Panc1 (cell line): ENCODE measurements at regions of chr17 and their contacts with region 1.

Region 1: DNA sequence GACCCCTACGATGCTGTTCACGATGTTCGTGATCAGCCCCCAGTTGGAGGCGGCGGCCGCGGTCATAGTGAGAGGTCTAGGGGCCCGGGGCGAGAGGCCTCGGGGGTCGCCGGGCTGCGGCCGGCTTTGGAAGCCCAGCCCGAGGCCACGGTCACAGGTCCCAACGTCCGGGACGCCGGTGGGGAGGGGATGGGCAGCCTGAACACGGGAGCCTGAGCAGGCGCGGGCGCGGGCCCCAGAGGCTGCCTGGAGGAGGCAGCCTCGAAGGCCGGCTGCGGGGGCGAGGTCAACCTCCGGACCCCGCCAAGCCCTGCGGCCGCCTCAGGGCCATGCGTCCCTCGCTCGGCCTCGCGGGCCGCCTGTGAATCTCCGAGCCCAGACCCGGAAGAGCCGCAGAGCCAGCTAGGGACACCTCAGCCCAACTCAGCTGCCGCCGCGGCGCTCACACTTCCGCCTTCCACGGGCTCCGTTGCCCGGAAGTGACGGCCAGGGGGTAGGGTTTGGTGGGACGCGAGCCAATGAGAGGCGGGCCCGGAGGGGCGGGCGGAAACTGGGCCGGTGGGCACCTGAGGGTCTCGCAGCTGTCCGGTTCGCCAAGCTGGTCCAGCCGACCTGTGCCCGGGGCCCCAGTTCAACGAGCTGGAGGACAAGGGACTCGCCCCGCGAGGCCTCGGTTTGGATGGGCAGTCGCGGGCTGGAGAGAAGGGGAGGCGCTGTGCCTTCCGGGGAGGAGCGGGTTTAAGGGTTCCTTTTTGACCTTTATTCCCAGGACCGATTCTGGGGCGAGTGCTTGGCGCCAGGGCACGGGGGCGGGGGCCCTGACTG is at the start of gene SLC38A10:
- DNase-seq: no peak
- ATAC-seq: peak; percentile 93
- H3K4me3 ChIP-seq: peak within 1 kb of the TSS; percentile 80 to 94
- H3K27ac ChIP-seq: peak within 1 kb of the TSS; percentile 97
- H3K4me1 ChIP-seq: peaks cover 32% of the 10 kb centered on the region
- H3K27me3 ChIP-seq: no peaks in the 10 kb centered on the region
- CTCF ChIP-seq: no peak
- total RNA-seq, gene SLC38A10: 188 TPM

Region 2: DNA sequence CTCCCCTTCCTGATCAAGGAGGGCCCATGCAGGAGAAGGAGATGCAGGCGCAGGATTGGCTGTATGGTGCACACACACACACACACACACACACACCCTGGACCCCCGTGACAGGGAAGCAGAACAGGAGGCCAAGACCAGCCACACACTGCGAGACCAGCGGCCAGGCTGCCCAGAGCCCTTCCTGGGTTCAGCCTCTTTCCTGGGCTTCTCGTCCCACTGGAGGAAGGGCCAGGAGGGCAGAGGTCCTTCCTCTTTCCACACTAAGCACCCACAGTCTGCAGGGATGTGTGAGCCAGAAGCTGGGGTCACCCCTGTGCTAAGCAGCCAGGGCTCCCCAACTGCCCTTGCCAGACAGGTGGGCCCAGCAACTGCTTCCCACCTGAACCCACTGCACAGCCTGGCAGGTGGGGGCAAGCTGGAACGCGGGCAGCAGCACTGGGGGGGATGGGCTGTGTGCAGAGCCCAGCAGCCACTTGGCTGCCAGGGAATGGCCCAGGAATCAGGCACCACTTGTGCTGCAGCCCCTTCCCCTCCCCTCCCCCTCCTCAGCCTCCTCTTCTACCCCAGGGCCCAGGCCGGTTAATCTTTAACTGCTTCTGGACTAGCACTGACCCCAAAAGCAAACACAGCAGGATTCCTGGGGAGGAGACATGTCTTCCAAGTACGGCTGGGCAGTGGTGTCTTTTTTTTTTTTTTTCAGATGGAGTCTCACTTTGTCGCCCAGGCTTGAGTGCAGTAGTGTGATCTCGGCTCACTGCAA is 44.6 kb after region 1 on chr17:
- CTCF ChIA-PET with region 1: no interaction called
- POLR2A ChIA-PET with region 1: interaction called, 4 read pairs
- in situ Hi-C with region 1: no loop called
- intact Hi-C with region 1: loop called (anchors 5 kb)
- DNase-seq: no peak
- ATAC-seq: peak; percentile 3; the same call in 1 of the 2 replicates
- H3K4me3 ChIP-seq: no peak overlapping the region
- H3K27ac ChIP-seq: peak overlapping the region; percentile 100
- H3K4me1 ChIP-seq: peaks cover 64% of the 10 kb centered on the region
- H3K27me3 ChIP-seq: no peaks in the 10 kb centered on the region
- CTCF ChIP-seq: no peak

Region 3: DNA sequence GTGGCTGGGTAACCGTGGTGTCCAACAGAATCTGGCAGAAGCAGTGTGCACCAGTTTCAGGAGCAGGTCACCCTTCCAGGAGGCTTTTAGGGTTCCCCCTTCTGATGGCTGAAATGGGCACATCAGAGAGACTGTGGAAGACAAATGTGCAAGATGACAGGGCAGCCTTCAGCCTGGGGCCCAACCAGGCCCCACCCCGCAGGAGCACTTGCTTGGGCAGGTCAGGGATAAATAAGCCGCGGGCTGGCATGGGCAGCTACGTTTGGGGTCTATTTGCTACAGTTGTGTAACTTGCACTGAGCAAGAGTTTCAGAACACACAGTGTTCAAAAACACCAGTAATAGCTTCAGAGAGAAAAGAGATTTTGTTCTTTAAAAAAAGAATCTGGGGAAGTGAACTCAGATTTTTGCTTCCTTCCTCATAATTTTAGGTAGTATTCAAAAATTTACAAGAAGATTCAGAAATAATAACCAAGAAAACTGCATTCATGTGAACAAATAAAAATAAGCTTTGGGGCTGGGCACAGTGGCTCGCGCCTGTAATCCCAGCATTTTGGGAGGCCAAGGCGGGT is 55.3 kb after region 1 on chr17:
- CTCF ChIA-PET with region 1: no interaction called
- POLR2A ChIA-PET with region 1: no interaction called
- in situ Hi-C with region 1: no loop called
- intact Hi-C with region 1: no loop called
- DNase-seq: no peak
- ATAC-seq: no peak
- H3K4me3 ChIP-seq: no peak overlapping the region
- H3K27ac ChIP-seq: peak overlapping the region; percentile 50; the same call in 1 of the 2 replicates
- H3K4me1 ChIP-seq: peaks cover 18% of the 10 kb centered on the region
- H3K27me3 ChIP-seq: no peaks in the 10 kb centered on the region
- CTCF ChIP-seq: no peak

Region 4: GRCh38 chr17:81401723-81402529 is 106.9 kb after region 1 on chr17:
- CTCF ChIA-PET with region 1: interaction called, 4 read pairs
- POLR2A ChIA-PET with region 1: no interaction called
- in situ Hi-C with region 1: no loop called
- intact Hi-C with region 1: loop called (anchors 5 kb)
- DNase-seq: no peak
- ATAC-seq: peak; percentile 36
- H3K4me3 ChIP-seq: peak overlapping the region; percentile 69 to 83
- H3K27ac ChIP-seq: peak overlapping the region; percentile 100
- H3K4me1 ChIP-seq: peaks cover 62% of the 10 kb centered on the region
- H3K27me3 ChIP-seq: no peaks in the 10 kb centered on the region
- CTCF ChIP-seq: peak; percentile 91